SK-N-SH (cell line): ENCODE measurements at regions of chr17 and their contacts with region 1.

Region 1: DNA sequence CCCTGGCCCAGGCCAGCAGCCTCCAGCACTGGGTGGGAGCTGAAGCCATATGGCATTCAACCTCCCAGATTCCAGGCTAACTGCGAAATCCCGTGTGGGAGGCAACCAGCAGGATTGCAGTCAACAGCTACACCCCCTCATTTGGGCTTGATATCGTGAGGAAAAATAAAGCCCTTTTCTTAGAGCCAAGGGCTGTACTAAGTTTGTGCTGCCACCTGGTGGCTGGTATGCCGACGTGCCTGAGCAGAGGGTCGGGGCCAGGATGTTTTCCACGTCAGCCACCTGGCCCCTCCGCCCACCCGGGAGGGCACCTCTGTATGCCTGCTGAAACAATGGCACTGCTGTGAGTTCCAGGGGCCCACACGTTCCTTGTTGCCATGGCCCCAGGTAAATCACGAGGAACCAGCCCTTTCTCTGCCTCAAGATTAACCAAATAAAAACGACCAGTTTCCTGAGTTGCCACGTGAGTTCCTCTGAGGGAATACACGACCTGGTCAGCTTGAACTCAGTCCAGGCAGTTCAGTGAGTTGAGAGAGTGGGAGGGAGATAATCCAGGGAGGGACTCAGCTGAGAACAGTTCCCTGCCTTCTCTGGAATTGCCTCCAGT is 9.0 kb downstream of the TMEM98 start:
- DNase-seq: peak; percentile 80
- H3K4me3 ChIP-seq: peak overlapping the region in 1 of 2 experiments; percentile 40; a peak in 1 of 4 replicates
- H3K27ac ChIP-seq: no peak overlapping the region; a peak in 1 of 4 replicates
- H3K4me1 ChIP-seq: no peaks in the 10 kb centered on the region; a peak in 1 of 4 replicates
- H3K27me3 ChIP-seq: no peaks in the 10 kb centered on the region
- CTCF ChIP-seq: peak; percentile 74
- EP300 ChIP-seq: no peak
- RAD21 ChIP-seq: peak; percentile 56

Region 2: DNA sequence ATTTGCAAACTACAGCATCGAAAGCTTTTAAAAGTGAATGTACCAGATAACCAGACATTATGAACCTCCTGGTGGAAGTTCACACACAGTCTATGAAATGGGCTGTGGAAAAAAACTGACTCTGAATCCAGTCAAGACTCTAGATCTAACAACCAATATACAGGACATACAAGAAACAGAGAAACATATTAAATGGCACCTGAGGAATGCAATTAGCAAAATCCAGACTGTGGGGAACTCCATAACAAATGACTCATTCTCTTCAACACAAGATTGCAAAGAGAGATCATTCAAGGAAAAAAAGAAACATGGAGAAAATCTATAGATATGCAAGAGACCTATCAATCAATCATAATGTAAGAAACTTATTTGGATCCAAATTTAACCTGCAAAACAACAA is 179.0 kb before region 1 on chr17:
- CTCF ChIA-PET with region 1: no interaction called
- POLR2A ChIA-PET with region 1: no interaction called
- DNase-seq: no peak
- H3K4me3 ChIP-seq: no peak overlapping the region
- H3K27ac ChIP-seq: no peak overlapping the region
- H3K4me1 ChIP-seq: no peaks in the 10 kb centered on the region; a peak in 1 of 4 replicates
- H3K27me3 ChIP-seq: no peaks in the 10 kb centered on the region
- CTCF ChIP-seq: no peak
- EP300 ChIP-seq: no peak
- RAD21 ChIP-seq: no peak

Region 3: DNA sequence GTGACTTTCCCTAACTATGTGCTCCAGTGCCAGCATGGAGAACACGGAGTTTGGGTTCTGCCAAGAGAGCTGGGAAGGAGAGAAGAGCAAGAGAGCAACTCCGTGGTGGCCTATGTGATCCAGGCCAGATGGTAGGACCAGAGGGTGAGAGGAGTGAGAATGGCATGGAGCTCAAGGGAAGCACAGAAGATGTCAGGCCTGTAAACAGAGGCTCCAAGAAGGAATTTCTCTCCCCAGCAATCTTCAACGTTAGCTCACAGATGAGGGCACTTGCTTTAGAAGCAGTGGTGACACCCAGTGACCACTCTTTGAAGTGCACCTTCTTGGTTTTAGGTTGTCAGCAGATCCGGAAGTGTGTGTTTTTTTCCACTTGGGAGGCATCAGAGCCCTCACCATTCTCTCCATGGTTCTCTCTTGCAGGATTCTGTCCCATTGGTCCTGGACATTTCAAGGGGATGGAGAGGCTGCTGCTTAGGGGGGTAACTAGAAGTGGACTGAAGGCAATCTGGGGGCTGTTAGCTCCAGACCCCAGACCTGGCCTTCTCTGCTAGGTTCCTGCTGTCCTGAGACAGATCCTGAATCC is 27.1 kb before region 1 on chr17:
- CTCF ChIA-PET with region 1: interaction called, 35 read pairs
- POLR2A ChIA-PET with region 1: no interaction called
- DNase-seq: peak; percentile 71
- H3K4me3 ChIP-seq: no peak overlapping the region; a peak in 1 of 4 replicates
- H3K27ac ChIP-seq: no peak overlapping the region
- H3K4me1 ChIP-seq: no peaks in the 10 kb centered on the region; a peak in 1 of 4 replicates
- H3K27me3 ChIP-seq: no peaks in the 10 kb centered on the region
- CTCF ChIP-seq: peak; percentile 78
- EP300 ChIP-seq: no peak
- RAD21 ChIP-seq: peak; percentile 73

Region 4: DNA sequence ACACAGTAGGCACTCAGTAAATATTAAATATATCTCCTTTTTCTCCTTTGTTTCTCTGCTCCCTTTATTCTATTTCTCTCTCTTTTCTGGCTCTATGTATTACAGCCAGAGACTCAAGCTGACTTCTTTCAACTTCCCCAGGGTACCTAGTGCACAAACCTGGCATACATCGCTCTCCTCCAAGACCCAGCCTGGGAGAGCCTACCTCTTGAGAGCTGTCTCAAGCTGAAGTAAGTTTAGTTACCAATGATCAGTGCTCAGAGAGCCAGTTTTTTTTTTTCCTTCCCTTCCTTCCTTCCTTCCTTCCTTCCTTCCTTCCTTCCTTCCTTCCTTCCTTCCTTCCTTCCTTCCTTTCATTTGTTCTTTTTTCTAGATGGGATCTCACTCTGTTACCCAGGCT is 10.7 kb after region 1 on chr17:
- CTCF ChIA-PET with region 1: interaction called, 13 read pairs
- POLR2A ChIA-PET with region 1: no interaction called
- DNase-seq: no peak
- H3K4me3 ChIP-seq: no peak overlapping the region
- H3K27ac ChIP-seq: no peak overlapping the region
- H3K4me1 ChIP-seq: no peaks in the 10 kb centered on the region
- H3K27me3 ChIP-seq: no peaks in the 10 kb centered on the region
- CTCF ChIP-seq: no peak
- EP300 ChIP-seq: no peak
- RAD21 ChIP-seq: no peak

Region 5: GRCh38 chr17:32954477-32954876 is 17.5 kb after region 1 on chr17:
- CTCF ChIA-PET with region 1: interaction called, 13 read pairs
- POLR2A ChIA-PET with region 1: no interaction called
- DNase-seq: no peak
- H3K4me3 ChIP-seq: no peak overlapping the region
- H3K27ac ChIP-seq: no peak overlapping the region
- H3K4me1 ChIP-seq: no peaks in the 10 kb centered on the region
- H3K27me3 ChIP-seq: no peaks in the 10 kb centered on the region; the same call in 1 of the 2 replicates
- CTCF ChIP-seq: no peak
- EP300 ChIP-seq: no peak
- RAD21 ChIP-seq: no peak